ENCODE measurements at regions of chr5 and their contacts with region 1.

Region 1: GRCh38 chr5:150758531-150759333 is at the start of gene DCTN4:
- DNase-seq: peak; percentile 87
- H3K4me3 ChIP-seq: peak within 1 kb of the TSS; percentile 85 to 91
- H3K27ac ChIP-seq: peak within 1 kb of the TSS; percentile 95 to 98
- H3K4me1 ChIP-seq: peaks cover 6 to 25% of the 10 kb centered on the region in 2 experiments; a peak in 3 of 4 replicates
- H3K27me3 ChIP-seq: no peaks in the 10 kb centered on the region
- CTCF ChIP-seq: no peak
- EP300 ChIP-seq: no peak
- RAD21 ChIP-seq: no peak
- polyA plus RNA-seq, gene DCTN4: 22.8 and 30.5 TPM in 2 replicates

Region 2: GRCh38 chr5:150778517-150779396 is 20.0 kb after region 1 on chr5 and contains the start of gene SMIM3:
- CTCF ChIA-PET with region 1: interaction called, 35 read pairs
- POLR2A ChIA-PET with region 1: interaction called, 13 read pairs
- DNase-seq: peak; percentile 86
- H3K4me3 ChIP-seq: peak within 1 kb of the TSS; percentile 85 to 91
- H3K27ac ChIP-seq: peak within 1 kb of the TSS; percentile 81 to 83
- H3K4me1 ChIP-seq: peaks cover 16 to 50% of the 10 kb centered on the region in 2 experiments; a peak in 3 of 4 replicates
- H3K27me3 ChIP-seq: no peaks in the 10 kb centered on the region
- CTCF ChIP-seq: peak; percentile 60
- EP300 ChIP-seq: peak in 1 of 2 experiments; percentile 50; a peak in 1 of 4 replicates
- RAD21 ChIP-seq: peak; percentile 80
- polyA plus RNA-seq, gene SMIM3: 39.9 and 44.8 TPM in 2 replicates

Region 3: DNA sequence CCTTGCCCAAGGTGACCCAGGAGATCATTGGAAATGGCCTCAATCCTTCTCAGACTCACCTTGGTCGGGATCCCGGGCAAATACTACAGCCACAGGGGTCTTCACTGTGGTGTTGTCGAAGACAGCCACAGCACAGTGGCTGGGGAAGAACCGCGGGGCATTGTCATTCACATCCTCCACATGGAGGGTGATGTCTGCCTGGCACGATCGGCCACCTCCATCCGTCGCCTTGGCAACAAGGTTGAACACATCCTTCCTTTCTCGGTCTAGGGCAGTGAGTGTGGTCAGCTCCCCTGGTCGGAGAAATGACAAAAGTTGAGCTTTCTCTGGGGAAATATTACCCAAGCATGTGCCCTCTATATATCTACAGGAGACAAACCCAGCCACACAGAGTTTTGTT is 775.6 kb after region 1 on chr5:
- CTCF ChIA-PET with region 1: no interaction called
- POLR2A ChIA-PET with region 1: no interaction called
- DNase-seq: no peak
- H3K4me3 ChIP-seq: no peak overlapping the region
- H3K27ac ChIP-seq: no peak overlapping the region
- H3K4me1 ChIP-seq: no peaks in the 10 kb centered on the region
- H3K27me3 ChIP-seq: peaks cover 4% of the 10 kb centered on the region; the same call in 1 of the 2 replicates
- CTCF ChIP-seq: no peak
- EP300 ChIP-seq: no peak
- RAD21 ChIP-seq: no peak